ENCODE measurements at regions of chr16 and their contacts with region 1.

Region 1: DNA sequence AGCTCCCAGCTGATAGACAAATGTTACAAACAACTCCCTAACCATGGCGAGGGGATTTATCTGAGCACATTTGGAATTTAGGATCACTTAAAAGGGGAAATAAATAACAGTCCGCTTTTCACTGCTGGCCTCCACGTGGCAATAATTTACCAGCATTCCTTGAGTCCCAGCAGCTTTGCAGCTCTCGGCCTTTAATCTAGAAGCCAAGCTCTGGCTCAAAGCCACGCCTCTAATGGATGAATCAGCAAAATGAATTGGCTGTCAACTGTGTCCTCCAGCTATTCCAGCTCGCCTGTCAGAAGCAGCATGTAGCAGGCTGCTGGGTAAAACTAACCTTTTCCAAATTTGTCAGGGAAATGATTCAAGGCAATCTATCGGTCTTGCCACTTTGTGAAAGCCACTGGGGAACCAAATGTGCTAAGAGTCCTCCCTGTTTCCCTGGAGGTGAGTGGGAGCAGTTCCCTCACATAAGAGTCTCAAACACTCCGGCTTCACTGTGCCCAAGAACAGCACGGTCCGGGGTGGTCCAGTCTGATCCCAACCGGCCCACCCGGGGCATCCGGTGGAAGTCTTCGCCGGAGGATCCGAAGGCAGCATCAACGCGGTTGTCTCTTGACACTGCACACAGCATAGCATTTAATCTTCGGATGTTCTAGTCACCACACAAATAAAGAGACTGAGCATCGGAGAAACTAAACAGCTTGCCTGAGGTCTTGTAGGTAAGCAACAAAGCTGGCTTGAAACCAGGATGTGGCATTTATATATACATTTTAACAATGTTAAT is 143.3 kb downstream of the PARN start:
- DNase-seq: peak; percentile 79 to 89
- H3K4me3 ChIP-seq: peak overlapping the region; percentile 47; the same call in 1 of the 2 replicates
- H3K27ac ChIP-seq: peak overlapping the region; percentile 81
- H3K4me1 ChIP-seq: peaks cover 40% of the 10 kb centered on the region
- H3K27me3 ChIP-seq: no peaks in the 10 kb centered on the region
- CTCF ChIP-seq: no peak

Region 2: GRCh38 chr16:14329727-14330350 is 156.9 kb before region 1 on chr16:
- CTCF ChIA-PET with region 1: no interaction called
- POLR2A ChIA-PET with region 1: interaction called, 10 read pairs
- intact Hi-C with region 1: no loop called
- DNase-seq: no peak
- H3K4me3 ChIP-seq: no peak overlapping the region
- H3K27ac ChIP-seq: no peak overlapping the region
- H3K4me1 ChIP-seq: no peaks in the 10 kb centered on the region
- H3K27me3 ChIP-seq: no peaks in the 10 kb centered on the region
- CTCF ChIP-seq: no peak